ENCODE measurements at regions of chr11 and their contacts with region 1.

Region 1: DNA sequence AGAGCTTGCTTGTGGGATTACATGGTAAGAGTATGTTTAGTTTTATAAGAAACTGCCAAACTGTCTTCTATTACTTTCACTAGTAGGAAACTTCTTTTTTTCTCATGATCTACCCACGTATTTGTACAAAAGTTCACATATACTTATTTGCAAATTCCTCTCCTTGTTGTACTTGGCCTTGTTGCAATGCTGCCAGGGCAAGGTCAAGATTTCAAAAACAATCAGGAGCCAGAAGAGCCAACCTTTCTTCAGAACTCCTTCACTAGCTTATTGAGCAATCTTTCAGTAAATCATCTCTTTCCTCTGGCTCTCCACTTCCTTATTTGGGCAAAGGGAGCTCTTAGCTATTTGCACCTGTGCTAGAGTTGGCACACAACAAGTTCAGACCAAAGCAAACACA is 9.7 kb downstream of the SRSF8 start:
- DNase-seq: no peak
- H3K4me3 ChIP-seq: no peak overlapping the region
- H3K27ac ChIP-seq: no peak overlapping the region
- H3K4me1 ChIP-seq: peaks cover 34% of the 10 kb centered on the region
- H3K27me3 ChIP-seq: no peaks in the 10 kb centered on the region
- CTCF ChIP-seq: no peak
- POLR2A ChIP-seq: no peak

Region 2: DNA sequence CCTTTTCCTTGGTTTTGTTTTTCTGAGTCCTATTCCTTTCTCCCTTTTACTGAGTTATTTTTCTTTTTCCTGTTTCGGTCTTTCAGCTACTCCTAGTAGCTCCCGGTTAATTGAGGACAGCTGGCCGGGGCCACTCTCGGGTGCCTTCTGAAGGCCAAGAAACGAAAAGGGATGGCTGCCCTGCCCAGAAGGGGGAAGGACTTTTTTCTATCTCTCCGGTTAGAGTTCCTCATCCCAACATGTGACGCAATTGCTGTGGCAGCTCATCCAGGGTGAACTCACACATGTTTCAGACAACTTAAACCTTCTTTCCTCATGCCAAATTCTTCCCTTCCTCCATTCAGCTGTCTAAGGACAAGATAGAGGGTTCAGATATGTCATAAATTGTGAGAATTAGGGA is 425.7 kb before region 1 on chr11:
- intact Hi-C with region 1: no loop called
- DNase-seq: peak in 1 of 2 donors; percentile 86
- H3K4me3 ChIP-seq: no peak overlapping the region
- H3K27ac ChIP-seq: no peak overlapping the region
- H3K4me1 ChIP-seq: no peaks in the 10 kb centered on the region
- H3K27me3 ChIP-seq: no peaks in the 10 kb centered on the region
- CTCF ChIP-seq: no peak
- POLR2A ChIP-seq: no peak

Region 3: GRCh38 chr11:95764267-95764898 is 688.0 kb after region 1 on chr11:
- intact Hi-C with region 1: loop called (anchors 10 kb)
- DNase-seq: no peak
- H3K4me3 ChIP-seq: no peak overlapping the region
- H3K27ac ChIP-seq: no peak overlapping the region
- H3K4me1 ChIP-seq: no peaks in the 10 kb centered on the region
- H3K27me3 ChIP-seq: no peaks in the 10 kb centered on the region
- CTCF ChIP-seq: peak; percentile 60 to 86 (median 65)
- POLR2A ChIP-seq: no peak